ENCODE measurements at regions of chr9 and their contacts with region 1.

Region 1: DNA sequence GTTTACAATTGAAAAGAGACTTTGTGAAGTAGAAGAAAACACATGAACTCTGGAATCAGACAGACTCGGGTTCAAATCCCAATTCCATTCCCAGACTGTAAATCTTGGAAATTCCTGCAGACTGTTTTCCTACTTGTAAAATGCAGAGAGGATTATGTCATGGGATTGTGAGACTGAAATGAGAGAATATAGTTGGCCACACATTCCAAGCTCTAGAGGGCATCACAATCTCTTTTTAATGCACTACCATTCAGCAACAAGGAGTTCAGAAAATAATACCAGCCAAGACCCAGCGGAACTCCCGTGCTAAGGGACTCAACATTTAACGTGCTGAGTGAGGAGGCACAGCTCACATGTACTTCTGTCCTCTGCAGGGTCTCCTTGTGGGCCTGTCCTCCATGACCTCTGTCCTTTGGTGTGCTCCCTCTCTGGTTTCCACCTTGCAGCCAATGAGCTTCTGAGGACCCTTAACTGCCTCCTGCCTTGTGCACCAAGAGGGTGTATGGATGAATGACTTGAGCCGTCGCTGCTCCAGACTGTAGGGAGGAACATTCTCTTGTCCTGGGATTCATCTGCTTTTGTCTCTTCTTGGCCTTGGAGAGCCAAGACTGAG is 263.5 kb downstream of the NTRK2 start:
- DNase-seq: no peak
- H3K4me3 ChIP-seq: no peak overlapping the region
- H3K27ac ChIP-seq: no peak overlapping the region
- H3K4me1 ChIP-seq: no peaks in the 10 kb centered on the region
- H3K27me3 ChIP-seq: no peaks in the 10 kb centered on the region
- CTCF ChIP-seq: no peak
- EP300 ChIP-seq: no peak
- POLR2A ChIP-seq: no peak

Region 2: DNA sequence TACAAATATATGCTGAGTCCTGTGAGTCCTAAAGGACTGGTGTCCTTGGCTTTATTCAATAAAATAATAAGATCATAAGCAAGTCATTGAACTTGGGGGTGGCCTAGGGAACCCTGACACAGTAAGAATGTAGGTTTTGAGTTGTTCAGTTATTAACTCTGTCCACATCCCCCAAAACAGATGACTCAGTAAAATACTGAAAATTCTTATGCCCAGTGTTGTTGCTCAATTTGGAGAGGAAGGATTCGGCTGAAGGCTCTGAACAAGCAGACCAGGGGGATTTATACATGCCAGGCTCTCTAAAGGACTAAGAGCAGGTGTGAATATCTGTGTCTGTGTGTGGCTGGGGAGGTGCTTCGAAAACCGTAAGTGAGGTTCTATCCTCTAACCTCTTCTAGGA is 778.7 kb before region 1 on chr9:
- intact Hi-C with region 1: no loop called
- DNase-seq: no peak
- H3K4me3 ChIP-seq: no peak overlapping the region
- H3K27ac ChIP-seq: no peak overlapping the region
- H3K4me1 ChIP-seq: no peaks in the 10 kb centered on the region
- H3K27me3 ChIP-seq: no peaks in the 10 kb centered on the region
- CTCF ChIP-seq: no peak
- EP300 ChIP-seq: no peak
- POLR2A ChIP-seq: no peak

Region 3: DNA sequence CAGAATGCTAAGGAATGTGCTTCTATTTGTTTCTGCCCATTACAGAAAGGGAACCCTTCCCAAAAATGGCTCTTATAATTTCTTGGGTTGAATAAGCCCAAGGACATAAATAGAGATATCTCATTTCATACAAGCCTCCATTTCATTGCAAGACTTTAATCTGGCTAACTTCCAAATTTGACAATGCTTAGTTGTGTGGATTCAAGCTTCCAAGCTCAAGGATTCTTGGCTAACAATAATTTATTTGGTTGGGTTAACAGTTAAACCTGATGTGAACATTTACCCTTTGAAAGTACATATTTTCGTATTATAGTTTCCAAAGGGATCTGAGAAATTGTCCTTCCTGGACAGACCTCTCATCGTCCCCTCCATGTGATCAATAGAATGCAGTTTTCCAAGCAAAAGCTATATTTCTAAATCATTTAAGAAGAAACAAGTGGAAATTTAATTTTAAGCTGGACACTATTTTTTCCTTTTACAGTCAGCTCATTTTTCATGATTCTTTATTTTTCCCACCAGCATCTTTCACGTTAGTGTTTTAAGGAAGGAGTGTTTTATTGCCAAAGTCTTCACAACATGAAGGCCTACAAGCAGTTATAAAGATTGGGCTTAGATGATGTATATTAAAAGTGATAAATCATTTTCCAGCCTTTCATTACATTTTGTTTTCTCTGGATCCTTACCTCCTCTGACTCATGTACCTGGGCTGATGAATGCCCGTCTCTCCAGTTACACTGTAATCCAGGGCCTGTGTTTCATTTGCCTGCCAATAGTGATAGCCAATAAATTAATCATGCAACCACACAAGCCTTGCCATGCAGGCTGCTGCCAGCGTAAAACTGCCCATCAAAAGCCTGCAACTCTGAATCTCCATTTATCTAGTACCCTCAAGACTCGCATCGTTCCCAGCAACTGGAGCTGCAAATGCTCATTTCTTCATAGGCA is 86.8 kb before region 1 on chr9:
- intact Hi-C with region 1: loop called in 1 of 4 experiments (anchors 10 kb)
- DNase-seq: no peak
- H3K4me3 ChIP-seq: no peak overlapping the region
- H3K27ac ChIP-seq: no peak overlapping the region
- H3K4me1 ChIP-seq: no peaks in the 10 kb centered on the region
- H3K27me3 ChIP-seq: no peaks in the 10 kb centered on the region
- CTCF ChIP-seq: no peak
- EP300 ChIP-seq: no peak
- POLR2A ChIP-seq: no peak

Region 4: GRCh38 chr9:84880835-84881234 is 52.2 kb before region 1 on chr9:
- intact Hi-C with region 1: no loop called
- DNase-seq: no peak
- H3K4me3 ChIP-seq: no peak overlapping the region
- H3K27ac ChIP-seq: no peak overlapping the region
- H3K4me1 ChIP-seq: peaks cover 3% of the 10 kb centered on the region
- H3K27me3 ChIP-seq: no peaks in the 10 kb centered on the region
- CTCF ChIP-seq: no peak
- EP300 ChIP-seq: no peak
- POLR2A ChIP-seq: no peak